ENCODE measurements at regions of chr2 and their contacts with region 1.

Region 1: DNA sequence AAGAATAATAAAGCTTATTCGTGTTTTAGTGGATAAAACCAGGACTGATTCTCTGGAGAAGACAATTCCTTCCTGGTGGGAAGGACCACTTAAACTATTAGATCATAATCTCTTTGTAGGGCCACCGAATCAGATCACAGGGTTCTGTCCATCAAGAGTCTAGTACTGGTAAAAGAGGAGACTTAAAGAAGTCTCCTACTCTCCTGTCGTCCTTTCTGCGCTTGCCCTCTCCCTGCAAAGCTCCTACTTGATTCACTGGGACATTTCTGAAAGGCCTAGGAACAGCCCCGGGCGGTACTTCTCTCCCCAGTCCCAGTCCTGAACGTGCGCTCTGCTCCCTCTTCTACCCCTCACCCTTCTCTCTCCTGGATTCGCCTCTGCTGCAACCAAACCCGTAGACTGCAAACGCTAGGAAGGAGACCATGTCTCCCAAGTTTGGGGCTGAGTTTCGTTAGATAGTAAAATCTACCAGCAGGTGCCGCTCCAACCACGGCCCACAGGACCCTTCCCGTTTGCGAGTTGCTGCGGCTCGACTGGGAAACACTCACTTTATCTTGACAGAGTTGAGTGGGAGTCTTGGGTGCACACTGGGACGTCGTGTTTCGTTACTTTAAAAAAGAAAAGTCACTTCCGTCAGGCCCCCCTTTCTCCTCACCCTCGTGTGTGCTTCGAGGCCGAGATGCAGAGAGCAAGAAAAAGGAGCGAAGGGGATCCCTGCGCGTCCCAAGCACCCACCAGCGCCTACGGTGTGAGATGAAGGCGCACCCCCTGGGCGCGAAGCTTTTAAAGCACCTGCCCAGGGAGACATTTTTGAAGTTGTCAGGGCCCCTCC is 923 bp downstream of the FIGLA start:
- DNase-seq: peak; percentile 59 to 62
- H3K4me3 ChIP-seq: peak overlapping the region in 1 of 3 donors; percentile 19
- H3K27ac ChIP-seq: no peak overlapping the region
- H3K4me1 ChIP-seq: peaks cover 7 to 10% of the 10 kb centered on the region in 2 donors
- H3K27me3 ChIP-seq: peaks cover 9% of the 10 kb centered on the region
- CTCF ChIP-seq: peak in 4 of 6 experiments; percentile 24 to 56 (median 46)
- POLR2A ChIP-seq: no peak

Region 2: GRCh38 chr2:70656421-70657010 is 133.0 kb before region 1 on chr2:
- intact Hi-C with region 1: loop called (anchors 5 kb)
- DNase-seq: no peak
- H3K4me3 ChIP-seq: no peak overlapping the region
- H3K27ac ChIP-seq: no peak overlapping the region
- H3K4me1 ChIP-seq: no peaks in the 10 kb centered on the region
- H3K27me3 ChIP-seq: no peaks in the 10 kb centered on the region
- CTCF ChIP-seq: no peak
- POLR2A ChIP-seq: no peak